SK-N-SH (cell line): ENCODE measurements at regions of chr11 and their contacts with region 1.

Region 1: DNA sequence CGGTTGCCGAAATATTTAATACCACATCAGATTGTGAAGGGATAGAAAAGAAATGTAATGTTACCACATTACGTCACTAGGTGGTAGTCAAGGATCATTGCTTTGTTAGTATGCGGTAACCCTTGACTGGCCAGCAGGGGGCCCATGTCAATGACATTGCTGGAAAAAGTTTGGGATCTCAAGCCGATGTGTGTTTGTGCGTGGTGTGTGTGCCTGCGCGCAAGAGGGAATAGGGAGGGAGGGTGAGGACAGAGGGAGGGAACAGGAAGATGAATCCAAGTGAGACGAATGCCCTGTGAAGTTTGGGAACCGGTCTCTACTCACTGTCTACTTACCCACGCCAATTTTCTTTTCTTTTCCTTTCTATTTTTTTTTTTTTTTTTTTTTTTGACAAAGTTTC is 10.7 kb upstream of the MRGPRX2 start:
- DNase-seq: peak; percentile 81
- H3K4me3 ChIP-seq: peak overlapping the region; percentile 27 to 30; a peak in 3 of 4 replicates
- H3K27ac ChIP-seq: no peak overlapping the region
- H3K4me1 ChIP-seq: peaks cover 0 to 2% of the 10 kb centered on the region in 2 experiments; a peak in 1 of 4 replicates
- H3K27me3 ChIP-seq: no peaks in the 10 kb centered on the region
- CTCF ChIP-seq: peak; percentile 99
- EP300 ChIP-seq: no peak
- RAD21 ChIP-seq: peak; percentile 93

Region 2: DNA sequence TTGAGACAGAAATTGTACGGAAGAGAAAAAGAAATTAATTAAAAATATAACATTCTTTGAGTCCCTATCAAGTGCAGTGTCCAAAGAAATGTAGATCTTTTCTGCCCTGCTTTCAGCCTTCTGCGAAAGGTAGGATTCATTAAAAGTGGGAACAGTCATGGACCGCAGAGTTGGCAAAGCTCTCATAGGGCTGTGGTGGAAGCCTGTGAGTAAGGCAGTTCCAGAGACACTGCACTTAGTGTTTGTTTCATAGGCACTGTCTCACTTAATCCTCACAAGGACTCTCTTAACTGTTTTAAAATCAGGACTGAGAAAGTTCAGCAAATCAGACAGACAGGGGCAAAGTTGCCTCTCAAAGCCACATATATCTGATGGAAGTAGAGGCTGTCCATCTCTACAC is 16.2 kb before region 1 on chr11:
- CTCF ChIA-PET with region 1: interaction called, 50 read pairs
- POLR2A ChIA-PET with region 1: no interaction called
- DNase-seq: no peak
- H3K4me3 ChIP-seq: no peak overlapping the region
- H3K27ac ChIP-seq: no peak overlapping the region
- H3K4me1 ChIP-seq: no peaks in the 10 kb centered on the region
- H3K27me3 ChIP-seq: peaks cover 20% of the 10 kb centered on the region
- CTCF ChIP-seq: no peak
- EP300 ChIP-seq: no peak
- RAD21 ChIP-seq: no peak

Region 3: GRCh38 chr11:19101796-19102520 is 30.7 kb after region 1 on chr11:
- CTCF ChIA-PET with region 1: interaction called, 16 read pairs
- POLR2A ChIA-PET with region 1: no interaction called
- DNase-seq: no peak
- H3K4me3 ChIP-seq: no peak overlapping the region
- H3K27ac ChIP-seq: no peak overlapping the region
- H3K4me1 ChIP-seq: peaks cover 0 to 2% of the 10 kb centered on the region in 2 experiments; a peak in 1 of 4 replicates
- H3K27me3 ChIP-seq: peaks cover 11% of the 10 kb centered on the region; the same call in 1 of the 2 replicates
- CTCF ChIP-seq: no peak
- EP300 ChIP-seq: no peak
- RAD21 ChIP-seq: no peak

Region 4: GRCh38 chr11:19259487-19260345 is 188.5 kb after region 1 on chr11:
- CTCF ChIA-PET with region 1: interaction called, 29 read pairs
- POLR2A ChIA-PET with region 1: no interaction called
- DNase-seq: peak; percentile 73
- H3K4me3 ChIP-seq: peak overlapping the region in 1 of 2 experiments; percentile 24; a peak in 1 of 4 replicates
- H3K27ac ChIP-seq: no peak overlapping the region
- H3K4me1 ChIP-seq: no peaks in the 10 kb centered on the region
- H3K27me3 ChIP-seq: peaks cover 7% of the 10 kb centered on the region; the same call in 1 of the 2 replicates
- CTCF ChIP-seq: peak; percentile 97
- EP300 ChIP-seq: no peak
- RAD21 ChIP-seq: peak; percentile 77

Region 5: DNA sequence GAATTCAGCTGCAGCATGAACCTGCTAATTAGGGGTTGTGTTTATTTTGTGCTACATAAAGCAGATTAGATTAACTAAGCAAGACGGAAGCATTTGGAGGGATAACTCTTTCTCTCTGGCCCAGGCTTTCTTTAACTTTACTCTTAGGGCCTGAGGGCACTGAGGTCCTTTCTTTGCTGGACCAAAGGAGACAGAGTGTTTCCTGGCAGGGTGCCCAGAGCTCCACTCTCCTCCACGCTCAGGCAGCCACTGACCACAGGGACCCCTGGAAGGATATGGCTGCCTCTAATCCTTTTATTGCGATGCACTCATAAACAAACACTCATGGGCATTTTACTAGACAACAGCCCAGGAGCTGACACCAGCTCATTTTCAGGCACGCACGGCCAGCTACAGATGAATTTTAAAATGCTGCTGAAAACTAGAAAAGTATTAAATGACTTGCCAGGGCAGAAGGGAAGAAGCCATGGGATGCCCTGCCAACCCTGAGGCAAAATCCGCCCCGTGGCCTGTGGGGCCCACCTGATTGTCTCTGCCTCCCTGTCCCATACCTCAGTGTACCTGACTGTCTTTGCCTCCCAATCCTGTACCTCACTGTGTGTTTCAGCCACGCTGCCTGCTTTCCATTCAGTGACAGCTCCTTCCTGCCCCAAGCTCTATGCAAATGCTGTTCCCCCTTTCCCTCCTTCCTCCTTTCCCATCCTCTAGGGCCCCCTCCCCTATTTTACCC is 448.8 kb after region 1 on chr11:
- CTCF ChIA-PET with region 1: interaction called, 11 read pairs
- POLR2A ChIA-PET with region 1: no interaction called
- DNase-seq: peak; percentile 66
- H3K4me3 ChIP-seq: no peak overlapping the region
- H3K27ac ChIP-seq: no peak overlapping the region
- H3K4me1 ChIP-seq: peaks cover 0 to 15% of the 10 kb centered on the region in 2 experiments; a peak in 1 of 4 replicates
- H3K27me3 ChIP-seq: peaks cover 13% of the 10 kb centered on the region; the same call in 1 of the 2 replicates
- CTCF ChIP-seq: no peak
- EP300 ChIP-seq: no peak
- RAD21 ChIP-seq: no peak